HEK293 (cell line): ENCODE measurements at regions of chr16 and their contacts with region 1.

Region 1: GRCh38 chr16:58119509-58119845 is 9.7 kb downstream of the CFAP20 start:
- H3K4me3 ChIP-seq: no peak overlapping the region
- H3K27ac ChIP-seq: no peak overlapping the region
- H3K4me1 ChIP-seq: peaks cover 20% of the 10 kb centered on the region
- CTCF ChIP-seq: no peak

Region 2: DNA sequence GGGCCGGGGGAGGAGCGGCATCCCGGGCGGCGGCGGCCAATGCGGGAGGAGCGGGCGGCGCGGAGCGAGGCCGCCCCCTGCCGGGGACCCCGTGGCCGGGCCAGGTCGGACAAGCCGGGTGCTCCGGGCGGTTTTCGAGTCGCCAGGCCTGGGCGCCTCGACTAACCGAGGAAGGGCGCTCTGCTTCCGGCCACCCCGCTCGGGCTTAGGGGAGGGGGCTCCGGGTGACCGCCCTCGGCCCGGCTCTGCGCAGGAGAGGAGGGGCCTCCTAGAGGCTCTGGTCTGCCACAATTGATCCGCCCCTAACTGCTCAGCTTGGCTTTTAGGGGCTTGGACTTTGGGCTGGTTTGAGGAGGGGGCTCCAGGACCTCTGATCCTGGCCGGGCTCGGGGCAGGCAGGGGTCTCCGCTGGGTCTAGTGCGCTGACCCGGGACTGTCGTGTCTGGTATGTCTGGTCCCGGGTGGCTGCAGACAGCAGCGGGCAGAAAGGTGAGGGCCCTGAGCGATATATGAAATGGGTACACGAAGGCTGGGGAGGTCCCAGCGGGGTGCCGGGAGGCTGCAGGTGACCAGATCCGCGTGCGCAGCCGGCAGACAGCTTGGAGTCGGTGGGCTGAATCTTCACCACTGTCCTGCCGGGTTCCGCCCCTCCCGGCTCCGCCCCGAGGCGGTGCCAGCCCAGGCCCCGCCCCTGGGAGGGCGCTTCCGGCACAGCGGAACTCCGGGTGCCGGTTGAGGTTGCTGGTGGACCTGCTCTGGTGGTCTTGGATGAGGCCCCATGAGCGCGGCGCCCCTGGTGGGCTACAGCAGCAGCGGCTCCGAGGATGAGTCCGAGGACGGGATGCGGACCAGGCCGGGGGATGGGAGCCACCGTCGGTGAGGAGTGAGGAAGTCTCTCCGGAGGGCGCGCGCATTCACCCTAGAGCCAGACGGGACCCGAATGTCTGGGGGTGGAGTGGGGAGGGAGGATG is 118.5 kb before region 1 on chr16 and contains the start of gene USB1:
- CTCF ChIA-PET with region 1: interaction called, 7 read pairs
- POLR2A ChIA-PET with region 1: interaction called, 10 read pairs
- H3K4me3 ChIP-seq: peak within 1 kb of the TSS; percentile 77
- H3K27ac ChIP-seq: peak within 1 kb of the TSS; percentile 40; the same call in 1 of the 2 replicates
- H3K4me1 ChIP-seq: no peaks in the 10 kb centered on the region
- CTCF ChIP-seq: peak; percentile 76

Region 3: DNA sequence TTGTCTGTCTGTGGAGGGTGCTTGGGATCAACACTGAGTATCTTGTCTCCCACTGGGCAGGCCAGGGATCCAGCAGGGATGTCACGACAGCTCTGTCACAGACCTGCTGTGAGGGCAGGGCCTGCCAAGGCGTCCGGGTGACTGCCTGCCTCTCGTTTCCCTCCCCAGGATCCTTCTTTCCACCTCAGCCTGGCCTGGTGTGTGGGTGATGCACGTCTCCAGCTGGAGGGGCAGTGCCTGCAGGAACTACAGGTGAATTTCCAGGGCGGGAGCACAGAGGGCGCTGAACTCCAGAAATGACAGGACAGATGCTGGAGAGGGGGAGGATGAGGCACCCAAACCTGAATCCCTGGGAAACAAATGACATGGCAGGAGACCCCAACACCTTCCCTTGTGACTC is 100.7 kb before region 1 on chr16:
- CTCF ChIA-PET with region 1: interaction called, 41 read pairs
- POLR2A ChIA-PET with region 1: interaction called, 11 read pairs
- H3K4me3 ChIP-seq: no peak overlapping the region
- H3K27ac ChIP-seq: no peak overlapping the region
- H3K4me1 ChIP-seq: peaks cover 13% of the 10 kb centered on the region
- CTCF ChIP-seq: peak; percentile 22; the same call in 1 of the 2 replicates

Region 4: GRCh38 chr16:58032710-58033293 is 86.7 kb before region 1 on chr16:
- CTCF ChIA-PET with region 1: interaction called, 18 read pairs
- POLR2A ChIA-PET with region 1: interaction called, 5 read pairs
- H3K4me3 ChIP-seq: no peak overlapping the region
- H3K27ac ChIP-seq: no peak overlapping the region
- H3K4me1 ChIP-seq: no peaks in the 10 kb centered on the region
- CTCF ChIP-seq: no peak

Region 5: GRCh38 chr16:58187092-58187491 is 67.6 kb after region 1 on chr16:
- CTCF ChIA-PET with region 1: no interaction called
- POLR2A ChIA-PET with region 1: no interaction called
- H3K4me3 ChIP-seq: no peak overlapping the region
- H3K27ac ChIP-seq: no peak overlapping the region
- H3K4me1 ChIP-seq: no peaks in the 10 kb centered on the region
- CTCF ChIP-seq: no peak